CD8-positive, alpha-beta memory T cell (primary cell): ENCODE measurements at regions of chr6 and their contacts with region 1.

Region 1: DNA sequence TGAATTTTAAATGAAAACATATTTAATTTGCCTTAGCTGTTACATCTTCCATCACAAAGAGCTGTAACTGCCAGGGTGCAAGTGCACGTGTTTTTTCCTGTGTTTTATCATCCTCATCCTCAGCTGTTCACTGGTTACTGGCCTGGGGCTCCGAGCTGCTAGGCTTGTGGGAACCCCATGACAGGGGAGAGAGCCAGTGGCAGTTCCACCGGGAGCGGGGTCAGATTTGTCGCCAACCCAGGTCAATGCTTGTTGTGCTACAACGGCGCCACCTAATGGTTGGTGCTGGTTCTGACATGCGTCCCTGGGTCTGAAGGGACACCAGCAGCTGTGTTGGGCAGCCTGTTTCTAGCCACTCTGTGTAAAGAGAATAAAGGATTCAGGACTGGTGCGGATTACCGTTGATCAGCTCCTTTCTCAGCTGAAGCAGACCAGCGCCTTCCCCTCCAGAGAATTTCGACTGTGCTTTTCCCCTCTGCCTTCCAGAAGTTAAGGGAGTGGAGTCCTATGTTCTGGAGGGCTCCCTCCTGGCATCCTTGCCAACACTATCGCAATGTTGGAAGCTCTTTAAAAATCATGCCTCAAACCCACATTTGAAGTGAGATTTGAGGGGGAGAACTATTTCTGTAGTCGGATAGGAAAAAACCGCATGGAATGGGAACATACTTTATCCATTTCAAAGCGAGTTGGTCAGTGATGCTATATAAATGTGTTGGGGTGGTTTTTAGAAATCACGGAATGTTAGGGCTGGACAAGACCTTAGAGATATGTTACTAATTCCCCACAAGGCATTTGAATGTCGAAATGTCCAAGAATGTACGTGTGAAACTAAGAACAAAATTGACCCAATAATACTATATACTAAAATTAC is 32.1 kb downstream of the SUMO4 start:
- DNase-seq: peak; percentile 71 to 89 (median 81)
- H3K4me3 ChIP-seq: no peak overlapping the region
- H3K4me3 Mint-ChIP-seq: peak overlapping the region in 6 of 7 donors; percentile 19 to 82 (median 73)
- H3K27ac ChIP-seq: no peak overlapping the region
- H3K27ac Mint-ChIP-seq: peak overlapping the region in 1 of 8 donors; percentile 65
- H3K4me1 ChIP-seq: peaks cover 4% of the 10 kb centered on the region
- H3K4me1 Mint-ChIP-seq: peaks cover 3 to 8% (median 8%) of the 10 kb centered on the region in 3 donors
- H3K27me3 ChIP-seq: no peaks in the 10 kb centered on the region
- H3K27me3 Mint-ChIP-seq: peaks cover 0 to 1% of the 10 kb centered on the region in 2 donors

Region 2: GRCh38 chr6:148677594-148678476 is 754.3 kb before region 1 on chr6:
- CTCF ChIA-PET with region 1: no interaction called
- POLR2A ChIA-PET with region 1: no interaction called
- DNase-seq: no peak
- H3K4me3 ChIP-seq: no peak overlapping the region
- H3K4me3 Mint-ChIP-seq: no peak overlapping the region
- H3K27ac ChIP-seq: no peak overlapping the region
- H3K27ac Mint-ChIP-seq: no peak overlapping the region
- H3K4me1 ChIP-seq: no peaks in the 10 kb centered on the region
- H3K4me1 Mint-ChIP-seq: peaks cover 0 to 1% (median 1%) of the 10 kb centered on the region in 3 donors
- H3K27me3 ChIP-seq: no peaks in the 10 kb centered on the region
- H3K27me3 Mint-ChIP-seq: peaks cover 17 to 46% of the 10 kb centered on the region in 2 donors

Region 3: DNA sequence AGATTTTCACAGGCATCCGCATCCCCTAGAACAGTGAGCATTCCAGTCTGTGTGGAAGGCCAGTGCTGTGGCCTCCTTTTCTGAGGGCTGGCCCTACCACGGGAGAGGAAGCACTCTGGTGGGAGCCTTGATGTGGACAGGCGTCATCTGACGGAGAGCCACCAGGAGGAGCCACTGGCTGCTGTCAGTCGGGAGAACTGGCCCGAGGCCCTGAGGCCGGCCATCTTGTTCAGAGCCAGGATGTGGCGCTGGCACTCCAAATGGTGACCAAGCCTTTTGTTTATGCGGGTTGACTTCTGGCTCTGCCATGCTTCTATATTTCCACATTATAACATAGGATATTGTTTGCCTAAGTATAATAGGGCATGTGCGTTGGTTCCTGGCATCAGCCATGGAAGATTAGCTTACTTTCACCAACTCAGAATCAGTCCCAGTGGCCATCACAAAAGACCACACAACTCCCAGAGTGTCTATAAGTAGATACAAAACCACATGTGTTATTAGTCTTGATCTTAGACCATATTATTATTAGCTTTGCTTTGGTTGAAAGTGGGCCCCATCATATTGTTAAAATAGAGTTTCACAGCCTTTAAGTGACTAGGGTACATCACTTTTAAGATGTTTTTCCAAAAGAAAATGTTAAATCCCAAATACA is 388.5 kb before region 1 on chr6:
- CTCF ChIA-PET with region 1: interaction called, 30 read pairs
- POLR2A ChIA-PET with region 1: no interaction called
- DNase-seq: no peak
- H3K4me3 ChIP-seq: no peak overlapping the region
- H3K4me3 Mint-ChIP-seq: no peak overlapping the region
- H3K27ac ChIP-seq: no peak overlapping the region
- H3K27ac Mint-ChIP-seq: no peak overlapping the region
- H3K4me1 ChIP-seq: peaks cover 22% of the 10 kb centered on the region
- H3K4me1 Mint-ChIP-seq: peaks cover 30 to 53% (median 39%) of the 10 kb centered on the region in 3 donors
- H3K27me3 ChIP-seq: no peaks in the 10 kb centered on the region
- H3K27me3 Mint-ChIP-seq: no peaks in the 10 kb centered on the region

Region 4: DNA sequence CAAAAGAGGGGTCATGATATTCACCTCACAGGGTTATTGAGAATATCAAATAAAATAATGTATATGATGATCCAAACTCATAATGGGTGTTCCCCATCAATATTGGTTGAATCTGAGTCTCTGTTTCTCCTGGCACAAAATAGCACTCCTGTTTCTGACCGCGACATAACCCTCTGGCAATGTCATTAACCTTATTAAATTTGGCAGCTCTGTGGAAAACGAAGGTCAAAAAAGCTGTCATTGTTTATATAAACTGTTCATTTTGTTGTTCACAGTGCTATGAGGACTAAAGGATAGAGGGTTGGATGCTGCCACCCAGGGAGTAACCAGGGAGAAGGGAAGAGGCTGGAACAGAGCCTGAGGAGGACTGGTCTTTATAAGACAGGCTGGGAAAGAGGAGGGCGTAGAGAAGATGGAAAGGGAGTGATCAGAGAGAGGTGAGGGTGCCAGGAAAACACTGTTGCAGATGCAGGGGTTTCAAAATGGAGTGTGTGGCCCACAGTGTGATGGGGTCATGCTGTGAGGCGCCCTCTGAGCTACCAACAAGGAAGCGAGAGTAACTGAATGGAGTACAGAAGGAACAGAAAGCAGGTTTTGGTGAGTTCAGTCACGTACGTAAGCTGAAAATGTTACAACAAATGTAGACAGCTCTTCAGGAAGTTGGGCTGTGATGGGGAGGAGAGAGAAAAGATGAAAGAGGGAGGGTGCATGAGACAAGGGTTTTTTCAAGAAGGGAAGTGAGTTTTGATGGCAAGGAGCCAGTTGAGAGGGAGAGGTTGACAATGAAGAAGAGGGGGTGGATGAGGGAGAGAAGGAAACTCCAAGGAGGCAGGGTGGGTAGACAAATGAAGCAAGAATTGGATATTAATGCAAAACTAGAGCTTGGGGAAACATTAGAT is 366.2 kb before region 1 on chr6:
- CTCF ChIA-PET with region 1: interaction called, 14 read pairs
- POLR2A ChIA-PET with region 1: no interaction called
- DNase-seq: peak in 3 of 5 donors; percentile 68 to 84 (median 75)
- H3K4me3 ChIP-seq: peak overlapping the region; percentile 35
- H3K4me3 Mint-ChIP-seq: peak overlapping the region in 6 of 7 donors; percentile 20 to 75 (median 54)
- H3K27ac ChIP-seq: no peak overlapping the region
- H3K27ac Mint-ChIP-seq: peak overlapping the region; percentile 40 to 96 (median 93)
- H3K4me1 ChIP-seq: peaks cover 33% of the 10 kb centered on the region
- H3K4me1 Mint-ChIP-seq: peaks cover 21 to 40% (median 32%) of the 10 kb centered on the region in 3 donors
- H3K27me3 ChIP-seq: no peaks in the 10 kb centered on the region
- H3K27me3 Mint-ChIP-seq: no peaks in the 10 kb centered on the region

Region 5: DNA sequence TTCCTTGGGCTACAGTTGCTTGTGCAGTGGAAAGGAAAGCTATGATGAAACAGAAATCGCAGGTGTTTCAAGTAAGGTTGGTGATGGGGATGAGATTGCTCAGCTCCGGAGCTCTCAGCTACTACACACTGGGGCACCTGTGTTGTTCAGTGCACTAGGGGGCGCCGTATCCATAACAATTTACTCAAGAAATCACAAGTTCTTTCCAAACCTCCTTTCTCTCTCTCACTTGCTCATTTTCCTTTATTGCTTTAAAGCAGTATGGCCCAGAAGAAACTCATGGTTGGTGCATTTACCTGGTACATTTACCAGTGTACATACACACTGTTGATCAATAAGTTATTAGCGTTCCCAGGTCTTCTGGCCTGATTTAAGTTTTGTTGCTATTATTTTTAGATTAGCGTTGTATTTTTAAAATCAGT is 349.8 kb before region 1 on chr6:
- CTCF ChIA-PET with region 1: interaction called, 41 read pairs
- POLR2A ChIA-PET with region 1: interaction called, 4 read pairs
- DNase-seq: peak; percentile 63 to 87 (median 70)
- H3K4me3 ChIP-seq: no peak overlapping the region
- H3K4me3 Mint-ChIP-seq: peak overlapping the region in 1 of 7 donors; percentile 7
- H3K27ac ChIP-seq: no peak overlapping the region
- H3K27ac Mint-ChIP-seq: peak overlapping the region in 2 of 8 donors; percentile 7 to 12
- H3K4me1 ChIP-seq: peaks cover 20% of the 10 kb centered on the region
- H3K4me1 Mint-ChIP-seq: peaks cover 23 to 51% (median 37%) of the 10 kb centered on the region in 3 donors
- H3K27me3 ChIP-seq: peaks cover under 1% of the 10 kb centered on the region
- H3K27me3 Mint-ChIP-seq: no peaks in the 10 kb centered on the region

Region 6: GRCh38 chr6:149094156-149094555 is 338.0 kb before region 1 on chr6:
- CTCF ChIA-PET with region 1: interaction called, 13 read pairs
- POLR2A ChIA-PET with region 1: no interaction called
- DNase-seq: no peak
- H3K4me3 ChIP-seq: no peak overlapping the region
- H3K4me3 Mint-ChIP-seq: peak overlapping the region in 5 of 7 donors; percentile 44 to 79 (median 66)
- H3K27ac ChIP-seq: no peak overlapping the region
- H3K27ac Mint-ChIP-seq: peak overlapping the region in 7 of 8 donors; percentile 14 to 89 (median 72)
- H3K4me1 ChIP-seq: peaks cover 32% of the 10 kb centered on the region
- H3K4me1 Mint-ChIP-seq: peaks cover 32 to 51% (median 50%) of the 10 kb centered on the region in 3 donors
- H3K27me3 ChIP-seq: no peaks in the 10 kb centered on the region
- H3K27me3 Mint-ChIP-seq: no peaks in the 10 kb centered on the region

Region 7: DNA sequence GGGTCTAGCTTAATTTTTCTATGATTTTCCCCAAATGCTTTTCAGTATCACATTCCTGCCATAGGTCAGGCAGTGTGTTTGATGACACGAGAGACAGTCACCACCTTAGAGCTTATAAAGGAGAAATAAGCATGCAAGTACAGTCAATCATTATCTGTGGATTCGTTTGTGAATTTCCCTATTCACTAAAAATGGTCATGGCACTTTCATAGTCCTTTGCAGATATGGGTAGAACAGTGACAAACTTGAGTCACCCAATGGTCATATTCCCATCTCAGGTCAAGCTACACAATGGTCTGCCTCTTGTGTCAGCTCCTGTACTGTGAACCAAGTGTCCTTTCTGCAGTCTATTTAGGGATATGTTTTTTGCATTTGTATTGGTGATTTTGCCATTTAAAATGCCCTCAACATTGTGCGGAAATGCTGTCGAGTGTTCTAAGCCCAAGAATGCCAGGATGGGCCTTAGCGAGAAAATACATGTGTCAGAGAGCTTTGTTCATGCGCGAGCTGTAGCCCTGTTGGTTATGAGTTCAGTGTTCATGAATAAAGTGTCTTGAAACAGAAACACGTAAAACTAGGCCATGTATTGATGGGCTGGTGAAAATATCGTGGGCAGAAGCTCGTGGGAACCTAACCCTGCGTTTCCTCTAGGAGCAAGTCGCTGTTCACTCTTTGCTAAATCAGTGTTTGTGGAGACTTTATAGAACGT is 12.3 kb before region 1 on chr6:
- CTCF ChIA-PET with region 1: interaction called, 18 read pairs
- POLR2A ChIA-PET with region 1: interaction called, 3 read pairs
- DNase-seq: no peak
- H3K4me3 ChIP-seq: no peak overlapping the region
- H3K4me3 Mint-ChIP-seq: no peak overlapping the region
- H3K27ac ChIP-seq: no peak overlapping the region
- H3K27ac Mint-ChIP-seq: no peak overlapping the region
- H3K4me1 ChIP-seq: no peaks in the 10 kb centered on the region
- H3K4me1 Mint-ChIP-seq: peaks cover 9 to 21% (median 17%) of the 10 kb centered on the region in 3 donors
- H3K27me3 ChIP-seq: no peaks in the 10 kb centered on the region
- H3K27me3 Mint-ChIP-seq: peaks cover 0 to 13% of the 10 kb centered on the region in 2 donors

Region 8: DNA sequence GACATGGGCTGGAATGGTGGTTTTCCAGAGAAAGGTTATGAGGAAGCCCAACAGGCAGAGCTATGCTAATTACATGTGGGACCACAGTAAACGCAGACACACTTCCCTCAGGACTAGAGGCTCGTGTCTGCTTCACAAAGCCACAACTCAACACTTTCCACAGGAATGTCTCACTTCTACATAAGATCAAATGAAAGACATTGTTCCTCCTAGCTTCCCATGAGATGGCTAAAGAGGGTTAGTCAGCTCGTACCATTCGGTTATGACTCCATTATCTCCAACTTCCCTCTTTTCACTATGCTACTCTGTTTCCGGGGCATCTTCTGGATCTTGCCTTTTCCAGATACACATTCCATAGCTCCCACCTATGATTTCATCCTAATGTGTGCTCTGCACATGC is 81.8 kb after region 1 on chr6:
- CTCF ChIA-PET with region 1: interaction called, 16 read pairs
- POLR2A ChIA-PET with region 1: no interaction called
- DNase-seq: no peak
- H3K4me3 ChIP-seq: no peak overlapping the region
- H3K4me3 Mint-ChIP-seq: no peak overlapping the region
- H3K27ac ChIP-seq: no peak overlapping the region
- H3K27ac Mint-ChIP-seq: peak overlapping the region in 2 of 8 donors; percentile 33 to 50
- H3K4me1 ChIP-seq: peaks cover 12% of the 10 kb centered on the region
- H3K4me1 Mint-ChIP-seq: peaks cover 20 to 47% (median 35%) of the 10 kb centered on the region in 3 donors
- H3K27me3 ChIP-seq: no peaks in the 10 kb centered on the region
- H3K27me3 Mint-ChIP-seq: no peaks in the 10 kb centered on the region